CD8-positive, alpha-beta T cell (primary cell): ENCODE measurements at regions of chr6 and their contacts with region 1.

Region 1: DNA sequence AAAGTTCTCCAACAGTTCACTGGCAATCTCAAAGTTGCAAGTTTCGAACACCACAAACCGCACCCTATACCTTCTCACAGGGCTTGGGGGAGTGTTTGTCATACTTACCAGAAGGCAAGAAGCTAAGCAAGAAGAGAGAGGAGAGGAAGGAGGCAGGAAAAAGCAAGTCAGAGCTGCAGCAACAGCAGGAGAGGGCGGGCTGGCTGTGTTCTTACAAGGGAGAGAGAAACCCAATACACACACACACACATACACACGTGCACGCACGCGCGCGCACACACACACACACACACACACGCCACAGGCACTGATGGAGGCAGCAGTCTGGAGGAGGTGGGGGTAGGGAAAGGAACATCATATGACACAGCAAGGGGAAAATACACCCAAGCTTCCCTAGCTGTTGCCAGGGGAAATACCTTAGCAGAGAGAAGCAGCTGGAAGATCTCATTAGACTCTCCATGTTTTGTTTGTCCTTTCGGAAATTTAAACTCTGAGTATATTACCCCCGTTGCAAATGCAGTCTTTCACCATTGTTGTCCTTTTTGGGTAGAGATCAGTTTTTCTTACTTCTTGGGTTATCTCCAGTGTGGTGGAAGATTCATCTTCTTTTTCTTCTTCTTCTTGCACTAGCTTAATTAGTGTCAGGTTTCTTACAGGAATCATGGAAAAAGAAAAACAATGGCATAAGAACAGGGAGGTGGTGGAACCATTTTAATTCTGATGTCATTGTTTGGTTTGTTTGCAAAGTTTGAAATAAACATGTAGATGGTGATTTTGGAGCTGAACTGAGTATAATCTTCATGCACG is at the start of gene TXLNB:
- DNase-seq: peak; percentile 55 to 92 (median 80)
- ATAC-seq: peak; percentile 85
- H3K4me3 ChIP-seq: peak within 1 kb of the TSS; percentile 16 to 34
- H3K4me3 Mint-ChIP-seq: peak within 1 kb of the TSS; percentile 77
- H3K27ac ChIP-seq: peak within 1 kb of the TSS; percentile 77 to 82
- H3K27ac Mint-ChIP-seq: peak within 1 kb of the TSS; percentile 96
- H3K4me1 ChIP-seq: peaks cover 39% of the 10 kb centered on the region
- H3K4me1 Mint-ChIP-seq: peaks cover 66% of the 10 kb centered on the region
- H3K27me3 ChIP-seq: no peaks in the 10 kb centered on the region
- H3K27me3 Mint-ChIP-seq: no peaks in the 10 kb centered on the region
- CTCF ChIP-seq: no peak
- total RNA-seq, gene TXLNB: 0.22 to 0.72 TPM

Region 2: DNA sequence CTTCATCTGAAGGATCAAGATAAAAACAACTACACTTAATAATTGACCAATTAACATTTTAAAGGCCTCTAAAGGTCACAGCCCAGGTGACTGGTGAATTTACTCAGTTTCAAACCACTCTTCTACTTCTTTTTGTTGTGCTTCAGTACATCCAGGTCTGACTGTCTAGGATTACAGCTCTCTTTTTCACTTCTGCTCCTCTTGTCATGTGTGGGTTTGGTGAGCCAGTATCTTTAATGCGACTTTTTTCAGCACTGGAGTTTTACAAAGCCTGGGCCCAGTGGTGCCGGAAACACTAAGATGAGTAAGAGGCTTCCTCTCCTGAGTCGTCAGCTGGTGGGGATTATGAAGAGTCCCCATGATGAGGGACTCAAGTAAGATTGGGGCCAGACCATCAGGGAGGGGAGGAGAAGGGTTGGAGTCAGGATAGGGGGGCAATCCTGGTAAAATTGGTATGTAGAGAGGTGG is 130.2 kb before region 1 on chr6:
- CTCF ChIA-PET with region 1: interaction called, 3 read pairs
- POLR2A ChIA-PET with region 1: interaction called, 10 read pairs
- intact Hi-C with region 1: no loop called
- DNase-seq: peak in 8 of 9 experiments; percentile 48 to 85 (median 71)
- ATAC-seq: peak; percentile 60
- H3K4me3 ChIP-seq: peak overlapping the region in 1 of 2 experiments; percentile 1
- H3K4me3 Mint-ChIP-seq: peak overlapping the region; percentile 70
- H3K27ac ChIP-seq: peak overlapping the region; percentile 52 to 68
- H3K27ac Mint-ChIP-seq: peak overlapping the region; percentile 93
- H3K4me1 ChIP-seq: peaks cover 86% of the 10 kb centered on the region
- H3K4me1 Mint-ChIP-seq: peaks cover 92% of the 10 kb centered on the region
- H3K27me3 ChIP-seq: no peaks in the 10 kb centered on the region
- H3K27me3 Mint-ChIP-seq: no peaks in the 10 kb centered on the region
- CTCF ChIP-seq: no peak

Region 3: GRCh38 chr6:139230391-139230840 is 61.6 kb before region 1 on chr6:
- CTCF ChIA-PET with region 1: no interaction called
- POLR2A ChIA-PET with region 1: no interaction called
- intact Hi-C with region 1: loop called in 1 of 2 experiments (anchors 5 kb)
- DNase-seq: peak in 2 of 9 experiments; percentile 17 to 27
- ATAC-seq: no peak
- H3K4me3 ChIP-seq: no peak overlapping the region
- H3K4me3 Mint-ChIP-seq: no peak overlapping the region
- H3K27ac ChIP-seq: no peak overlapping the region
- H3K27ac Mint-ChIP-seq: peak overlapping the region; percentile 10
- H3K4me1 ChIP-seq: no peaks in the 10 kb centered on the region
- H3K4me1 Mint-ChIP-seq: peaks cover 9% of the 10 kb centered on the region
- H3K27me3 ChIP-seq: no peaks in the 10 kb centered on the region
- H3K27me3 Mint-ChIP-seq: no peaks in the 10 kb centered on the region
- CTCF ChIP-seq: no peak

Region 4: DNA sequence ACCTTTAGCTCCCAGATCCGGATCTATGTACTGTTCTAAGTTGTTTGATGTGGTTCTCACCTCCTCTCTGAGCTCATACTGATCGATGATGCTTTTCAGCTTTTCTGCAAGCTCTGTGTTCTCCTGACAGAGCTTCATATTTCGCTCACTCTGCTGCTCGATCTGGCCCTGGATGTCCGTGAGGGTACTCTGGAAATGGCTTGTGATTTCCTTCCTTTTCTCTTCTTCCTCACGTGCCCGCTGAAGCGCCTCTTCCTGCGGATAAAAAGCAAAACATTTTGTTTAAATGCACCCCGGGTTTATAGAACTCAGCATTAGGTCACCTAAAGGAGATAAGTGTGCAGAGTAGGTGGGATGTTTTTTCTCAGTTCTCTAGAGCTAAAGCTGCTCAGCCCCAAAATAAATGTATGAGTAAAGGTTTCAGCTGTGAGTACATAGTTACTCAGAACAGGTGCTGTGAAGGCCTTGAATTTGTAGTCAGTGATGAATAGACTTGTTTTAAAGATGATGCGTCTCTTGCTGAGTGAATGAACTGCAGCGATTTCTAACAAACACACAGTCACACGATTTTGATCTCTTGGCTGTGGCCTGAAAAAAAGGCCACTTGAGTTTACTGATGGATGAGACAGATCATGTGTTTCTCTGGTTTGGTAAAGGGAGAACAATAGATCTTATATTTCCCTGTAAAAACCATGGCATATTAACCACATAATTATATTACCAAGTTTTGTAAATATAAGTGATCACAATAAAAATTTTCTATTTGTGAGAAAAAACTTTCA is 29.3 kb before region 1 on chr6:
- CTCF ChIA-PET with region 1: interaction called, 3 read pairs
- POLR2A ChIA-PET with region 1: interaction called, 10 read pairs
- intact Hi-C with region 1: no loop called
- DNase-seq: peak in 3 of 9 experiments; percentile 10 to 72 (median 52)
- ATAC-seq: peak; percentile 90
- H3K4me3 ChIP-seq: peak overlapping the region in 1 of 2 experiments; percentile 19
- H3K4me3 Mint-ChIP-seq: peak overlapping the region; percentile 77
- H3K27ac ChIP-seq: peak overlapping the region in 1 of 2 experiments; percentile 51
- H3K27ac Mint-ChIP-seq: peak overlapping the region; percentile 84
- H3K4me1 ChIP-seq: peaks cover 13% of the 10 kb centered on the region
- H3K4me1 Mint-ChIP-seq: peaks cover 21% of the 10 kb centered on the region
- H3K27me3 ChIP-seq: no peaks in the 10 kb centered on the region
- H3K27me3 Mint-ChIP-seq: no peaks in the 10 kb centered on the region
- CTCF ChIP-seq: no peak

Region 5: GRCh38 chr6:139303185-139303584 is 11.2 kb after region 1 on chr6:
- CTCF ChIA-PET with region 1: interaction called, 12 read pairs
- POLR2A ChIA-PET with region 1: interaction called, 4 read pairs
- intact Hi-C with region 1: no loop called
- DNase-seq: no peak
- ATAC-seq: no peak
- H3K4me3 ChIP-seq: no peak overlapping the region
- H3K4me3 Mint-ChIP-seq: no peak overlapping the region
- H3K27ac ChIP-seq: no peak overlapping the region
- H3K27ac Mint-ChIP-seq: no peak overlapping the region
- H3K4me1 ChIP-seq: no peaks in the 10 kb centered on the region
- H3K4me1 Mint-ChIP-seq: peaks cover 3% of the 10 kb centered on the region
- H3K27me3 ChIP-seq: no peaks in the 10 kb centered on the region
- H3K27me3 Mint-ChIP-seq: no peaks in the 10 kb centered on the region
- CTCF ChIP-seq: no peak

Region 6: DNA sequence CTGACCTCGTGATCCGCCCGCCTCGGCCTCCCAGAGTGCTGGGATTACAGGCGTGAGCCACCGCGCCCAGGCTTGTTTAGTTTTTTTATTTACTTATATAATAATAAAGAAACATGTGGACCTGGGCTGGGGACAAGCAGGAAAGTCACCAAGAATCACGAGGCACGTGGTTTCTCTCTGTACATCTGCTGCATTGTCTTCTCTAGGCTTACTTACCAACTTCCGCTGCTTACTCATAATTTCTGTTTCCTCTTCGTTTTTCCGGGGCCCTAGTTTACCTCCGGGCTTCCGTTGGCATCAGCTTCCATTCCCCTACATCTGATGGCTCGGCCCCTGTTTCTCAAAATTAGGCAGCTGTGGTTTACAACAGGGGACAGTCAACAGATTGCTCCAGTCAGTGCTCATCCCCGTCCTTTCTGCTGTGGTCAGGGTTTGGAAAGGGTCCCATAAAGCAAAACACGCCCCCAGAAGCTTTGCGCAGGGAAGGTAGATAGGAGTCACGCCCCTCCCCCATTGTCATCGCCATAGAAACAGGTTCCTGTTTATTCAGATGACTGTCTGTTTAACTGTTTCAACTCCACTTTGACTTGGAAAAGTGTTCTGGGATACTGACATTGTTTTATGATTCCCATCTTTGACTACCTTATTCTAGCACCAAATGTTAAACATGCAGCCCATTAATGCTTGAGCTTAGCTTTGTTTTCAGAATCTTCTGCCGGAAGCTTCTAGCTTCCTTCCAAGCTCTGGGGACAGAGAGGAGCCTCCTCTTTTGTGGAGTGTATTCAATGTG is 31.7 kb after region 1 on chr6:
- CTCF ChIA-PET with region 1: interaction called, 8 read pairs
- POLR2A ChIA-PET with region 1: interaction called, 25 read pairs
- intact Hi-C with region 1: loop called (anchors 1 to 2 kb)
- DNase-seq: peak; percentile 56 to 91 (median 84)
- ATAC-seq: peak; percentile 87
- H3K4me3 ChIP-seq: peak overlapping the region; percentile 54 to 59
- H3K4me3 Mint-ChIP-seq: peak overlapping the region; percentile 89
- H3K27ac ChIP-seq: peak overlapping the region; percentile 82 to 97
- H3K27ac Mint-ChIP-seq: peak overlapping the region; percentile 97
- H3K4me1 ChIP-seq: peaks cover 18% of the 10 kb centered on the region
- H3K4me1 Mint-ChIP-seq: peaks cover 35% of the 10 kb centered on the region
- H3K27me3 ChIP-seq: no peaks in the 10 kb centered on the region
- H3K27me3 Mint-ChIP-seq: no peaks in the 10 kb centered on the region
- CTCF ChIP-seq: no peak

Region 7: DNA sequence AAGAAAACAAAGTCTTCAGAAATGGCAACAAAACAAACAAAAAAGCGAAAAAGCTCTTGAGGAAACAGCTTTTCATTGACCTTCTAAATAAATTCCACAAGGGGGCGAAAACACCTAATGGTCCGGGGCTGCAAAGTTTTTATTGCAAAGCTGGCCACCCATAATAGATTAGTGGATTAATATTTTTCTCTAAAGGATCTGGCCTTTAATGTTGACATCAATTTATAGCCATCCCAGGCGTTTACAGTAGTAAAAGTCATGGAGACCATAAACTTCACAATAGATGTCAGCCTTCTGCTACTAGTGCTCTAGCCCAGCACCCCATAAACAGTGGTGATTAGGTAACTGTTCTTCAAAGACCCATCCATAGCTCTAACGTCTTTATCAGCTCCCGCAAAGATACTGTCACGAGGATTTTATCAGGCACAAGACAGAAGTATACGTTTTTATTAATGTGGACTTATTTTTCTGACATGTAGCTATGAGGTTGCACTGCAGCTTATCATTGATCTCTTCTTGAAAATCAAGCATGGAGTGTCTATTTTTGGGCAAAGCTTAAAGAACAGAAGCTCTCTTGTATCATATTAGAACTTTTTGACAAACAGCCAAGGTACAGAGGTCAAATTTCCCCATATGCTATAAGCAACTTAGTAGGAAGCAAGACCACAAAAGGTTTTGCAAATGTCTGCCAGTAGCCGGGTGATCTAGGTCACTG is 77.7 kb after region 1 on chr6:
- CTCF ChIA-PET with region 1: interaction called, 20 read pairs
- POLR2A ChIA-PET with region 1: interaction called, 44 read pairs
- intact Hi-C with region 1: loop called (anchors 1 to 5 kb)
- DNase-seq: peak in 2 of 9 experiments; percentile 56 to 69
- ATAC-seq: no peak
- H3K4me3 ChIP-seq: no peak overlapping the region
- H3K4me3 Mint-ChIP-seq: peak overlapping the region; percentile 66
- H3K27ac ChIP-seq: peak overlapping the region in 1 of 2 experiments; percentile 86
- H3K27ac Mint-ChIP-seq: peak overlapping the region; percentile 98
- H3K4me1 ChIP-seq: peaks cover 31% of the 10 kb centered on the region
- H3K4me1 Mint-ChIP-seq: peaks cover 49% of the 10 kb centered on the region
- H3K27me3 ChIP-seq: no peaks in the 10 kb centered on the region
- H3K27me3 Mint-ChIP-seq: no peaks in the 10 kb centered on the region
- CTCF ChIP-seq: peak; percentile 88